ENCODE measurements at regions of chr2 and their contacts with region 1.

Region 1: DNA sequence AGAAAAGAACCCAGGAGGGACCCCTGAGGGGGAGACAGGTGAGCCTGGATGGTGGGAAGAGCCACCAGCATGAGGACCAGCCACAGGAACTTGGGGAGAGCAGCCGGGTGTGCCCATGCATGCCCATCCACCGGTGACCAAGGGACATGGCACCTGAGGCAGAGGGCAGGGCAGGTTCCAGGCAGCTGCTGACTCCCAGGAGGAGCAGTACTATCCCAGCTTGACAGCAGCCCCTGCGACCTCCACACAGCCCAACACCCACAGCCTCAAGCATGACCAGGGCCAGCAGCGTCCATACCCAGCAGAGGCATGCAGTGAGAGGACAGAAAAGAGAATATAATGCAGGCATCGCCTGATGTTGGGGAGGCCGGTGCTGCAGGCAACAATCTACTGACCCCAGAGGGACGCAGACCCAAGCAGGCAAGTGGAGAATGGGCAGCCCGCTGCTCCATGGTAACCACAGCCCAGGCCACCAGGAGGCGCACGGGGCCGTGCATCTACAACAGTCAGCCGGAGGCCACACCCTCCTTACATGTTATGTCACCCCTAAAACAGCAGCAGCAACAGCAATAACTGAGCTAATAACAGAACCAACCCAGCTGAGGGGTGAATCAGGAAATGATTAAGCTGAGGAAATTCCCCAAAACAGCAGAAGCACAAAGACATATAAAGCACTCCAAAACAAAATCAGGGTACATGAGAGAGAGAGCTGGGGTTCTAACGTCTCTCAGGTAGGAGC is 44.1 kb downstream of the ANKMY1 start:
- DNase-seq: peak; percentile 67 to 90 (median 81)
- ATAC-seq: peak; percentile 96 to 99 (median 98)
- H3K4me3 ChIP-seq: no peak overlapping the region
- H3K4me3 Mint-ChIP-seq: no peak overlapping the region
- H3K27ac ChIP-seq: peak overlapping the region; percentile 42
- H3K27ac Mint-ChIP-seq: peak overlapping the region; percentile 74 to 77
- H3K4me1 ChIP-seq: peaks cover 0 to 13% of the 10 kb centered on the region in 2 experiments
- H3K4me1 Mint-ChIP-seq: peaks cover 9 to 15% (median 14%) of the 10 kb centered on the region in 3 donors
- H3K27me3 ChIP-seq: peaks cover 0 to 2% of the 10 kb centered on the region in 2 experiments
- H3K27me3 Mint-ChIP-seq: no peaks in the 10 kb centered on the region

Region 2: GRCh38 chr2:240530181-240530580 is 16.5 kb after region 1 on chr2:
- CTCF ChIA-PET with region 1: no interaction called
- POLR2A ChIA-PET with region 1: no interaction called
- DNase-seq: no peak
- ATAC-seq: no peak
- H3K4me3 ChIP-seq: no peak overlapping the region
- H3K4me3 Mint-ChIP-seq: no peak overlapping the region
- H3K27ac ChIP-seq: no peak overlapping the region
- H3K27ac Mint-ChIP-seq: no peak overlapping the region
- H3K4me1 ChIP-seq: no peaks in the 10 kb centered on the region
- H3K4me1 Mint-ChIP-seq: no peaks in the 10 kb centered on the region
- H3K27me3 ChIP-seq: no peaks in the 10 kb centered on the region
- H3K27me3 Mint-ChIP-seq: no peaks in the 10 kb centered on the region

Region 3: GRCh38 chr2:240566203-240567136 is 52.8 kb after region 1 on chr2:
- CTCF ChIA-PET with region 1: interaction called in 1 of 2 experiments, 31 read pairs
- POLR2A ChIA-PET with region 1: no interaction called
- DNase-seq: peak; percentile 86 to 97 (median 93)
- ATAC-seq: peak; percentile 64 to 73 (median 67)
- H3K4me3 ChIP-seq: peak overlapping the region; percentile 82 to 83
- H3K4me3 Mint-ChIP-seq: peak overlapping the region; percentile 87 to 91 (median 91)
- H3K27ac ChIP-seq: peak overlapping the region; percentile 94
- H3K27ac Mint-ChIP-seq: peak overlapping the region; percentile 98 to 99
- H3K4me1 ChIP-seq: peaks cover 50 to 88% of the 10 kb centered on the region in 2 experiments
- H3K4me1 Mint-ChIP-seq: peaks cover 75 to 80% (median 76%) of the 10 kb centered on the region in 3 donors
- H3K27me3 ChIP-seq: peaks cover 0 to 2% of the 10 kb centered on the region in 2 experiments
- H3K27me3 Mint-ChIP-seq: no peaks in the 10 kb centered on the region

Region 4: GRCh38 chr2:240579771-240580614 is 66.3 kb after region 1 on chr2:
- CTCF ChIA-PET with region 1: interaction called in 1 of 2 experiments, 28 read pairs
- POLR2A ChIA-PET with region 1: no interaction called
- DNase-seq: peak; percentile 52 to 89 (median 74)
- ATAC-seq: peak; percentile 86 to 94 (median 90)
- H3K4me3 ChIP-seq: no peak overlapping the region
- H3K4me3 Mint-ChIP-seq: peak overlapping the region in 2 of 3 donors; percentile 2 to 29
- H3K27ac ChIP-seq: peak overlapping the region; percentile 44
- H3K27ac Mint-ChIP-seq: peak overlapping the region; percentile 86 to 88
- H3K4me1 ChIP-seq: peaks cover 12 to 42% of the 10 kb centered on the region in 2 experiments
- H3K4me1 Mint-ChIP-seq: peaks cover 39 to 49% (median 41%) of the 10 kb centered on the region in 3 donors
- H3K27me3 ChIP-seq: no peaks in the 10 kb centered on the region
- H3K27me3 Mint-ChIP-seq: no peaks in the 10 kb centered on the region

Region 5: GRCh38 chr2:240586198-240586918 is 72.6 kb after region 1 on chr2 and contains the start of gene CAPN10:
- CTCF ChIA-PET with region 1: interaction called, 3 to 28 read pairs
- POLR2A ChIA-PET with region 1: interaction called in 1 of 2 experiments, 3 read pairs
- DNase-seq: peak; percentile 91 to 99 (median 95)
- ATAC-seq: peak; percentile 89 to 92 (median 90)
- H3K4me3 ChIP-seq: peak within 1 kb of the TSS; percentile 76 to 96
- H3K4me3 Mint-ChIP-seq: peak within 1 kb of the TSS; percentile 92 to 94 (median 94)
- H3K27ac ChIP-seq: peak within 1 kb of the TSS; percentile 84
- H3K27ac Mint-ChIP-seq: peak within 1 kb of the TSS; percentile 93
- H3K4me1 ChIP-seq: peaks cover 19 to 50% of the 10 kb centered on the region in 2 experiments
- H3K4me1 Mint-ChIP-seq: peaks cover 43 to 61% (median 60%) of the 10 kb centered on the region in 3 donors
- H3K27me3 ChIP-seq: no peaks in the 10 kb centered on the region
- H3K27me3 Mint-ChIP-seq: no peaks in the 10 kb centered on the region
- total RNA-seq, gene CAPN10: 73.3 to 107 (median 96.1) TPM

Region 6: GRCh38 chr2:240622531-240623235 is 109.0 kb after region 1 on chr2:
- CTCF ChIA-PET with region 1: interaction called in 1 of 2 experiments, 14 read pairs
- POLR2A ChIA-PET with region 1: no interaction called
- DNase-seq: peak in 30 of 35 experiments; percentile 23 to 82 (median 62)
- ATAC-seq: peak; percentile 14 to 59 (median 40)
- H3K4me3 ChIP-seq: peak overlapping the region; percentile 11 to 30
- H3K4me3 Mint-ChIP-seq: peak overlapping the region in 2 of 3 donors; percentile 21 to 85
- H3K27ac ChIP-seq: peak overlapping the region; percentile 96
- H3K27ac Mint-ChIP-seq: peak overlapping the region; percentile 88 to 96
- H3K4me1 ChIP-seq: peaks cover 47 to 84% of the 10 kb centered on the region in 2 experiments
- H3K4me1 Mint-ChIP-seq: peaks cover 49 to 61% (median 58%) of the 10 kb centered on the region in 3 donors
- H3K27me3 ChIP-seq: no peaks in the 10 kb centered on the region
- H3K27me3 Mint-ChIP-seq: no peaks in the 10 kb centered on the region

Region 7: GRCh38 chr2:240840435-240841080 is 326.8 kb after region 1 on chr2:
- CTCF ChIA-PET with region 1: interaction called, 8 to 11 read pairs
- POLR2A ChIA-PET with region 1: interaction called in 1 of 2 experiments, 3 read pairs
- DNase-seq: peak in 1 of 35 experiments; percentile 44
- ATAC-seq: peak in 2 of 4 experiments; percentile 40 to 51
- H3K4me3 ChIP-seq: no peak overlapping the region
- H3K4me3 Mint-ChIP-seq: no peak overlapping the region
- H3K27ac ChIP-seq: no peak overlapping the region
- H3K27ac Mint-ChIP-seq: no peak overlapping the region
- H3K4me1 ChIP-seq: no peaks in the 10 kb centered on the region
- H3K4me1 Mint-ChIP-seq: no peaks in the 10 kb centered on the region
- H3K27me3 ChIP-seq: peaks cover 4 to 41% of the 10 kb centered on the region in 2 experiments
- H3K27me3 Mint-ChIP-seq: peaks cover 9 to 15% of the 10 kb centered on the region in 2 donors